ENCODE measurements at regions of chr11 and their contacts with region 1.

Region 1: DNA sequence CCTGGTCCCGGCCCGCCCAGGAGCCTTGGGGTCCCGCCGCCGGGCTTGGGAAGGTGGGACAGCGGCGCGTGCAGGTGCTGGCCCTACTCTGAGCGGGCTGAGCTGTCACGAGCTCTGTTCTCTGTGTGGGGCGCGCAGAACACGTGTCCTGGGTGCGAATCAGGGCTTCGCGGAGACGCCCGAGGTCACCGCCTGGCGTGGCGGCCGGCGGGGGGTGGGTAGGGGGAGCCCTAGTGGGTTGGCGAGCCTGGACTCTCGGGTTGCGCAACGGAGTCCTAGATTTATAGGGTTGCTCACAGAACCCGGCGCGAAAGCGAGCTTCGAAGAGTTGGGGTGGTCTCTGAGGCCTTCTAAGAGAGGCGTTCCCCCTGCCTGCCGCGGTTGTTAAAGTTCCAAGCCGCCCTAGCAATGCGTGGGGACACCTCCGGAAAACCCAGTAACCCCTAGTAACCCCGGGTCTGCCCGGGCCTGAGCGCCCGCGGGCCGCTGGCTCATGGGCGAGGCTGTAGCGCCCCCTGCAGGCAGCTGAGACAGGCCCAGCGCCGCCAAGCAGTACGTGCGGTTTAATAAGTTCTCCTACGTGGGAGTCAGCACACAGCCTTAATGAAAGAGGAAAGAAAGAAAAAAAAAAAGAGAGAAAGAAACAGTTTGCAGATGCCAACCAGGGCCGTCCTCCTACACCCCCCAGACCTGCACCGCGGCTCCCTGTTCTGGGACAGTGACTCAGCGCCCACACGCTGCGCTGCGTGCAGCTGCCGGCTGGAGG is 2.8 kb downstream of the ADM start:
- DNase-seq: peak; percentile 71
- ATAC-seq: peak; percentile 62
- H3K4me3 ChIP-seq: peak overlapping the region; percentile 79 to 88 (median 82)
- H3K27ac ChIP-seq: peak overlapping the region; percentile 69
- H3K4me1 ChIP-seq: peaks cover 45% of the 10 kb centered on the region
- H3K27me3 ChIP-seq: no peaks in the 10 kb centered on the region; a peak in 1 of 5 replicates
- CTCF ChIP-seq: peak; percentile 92
- EP300 ChIP-seq: peak in 1 of 2 experiments; percentile 35; a peak in 2 of 4 replicates
- POLR2A ChIP-seq: peak in 1 of 2 experiments; percentile 6; a peak in 1 of 4 replicates
- RAD21 ChIP-seq: peak; percentile 94

Region 2: GRCh38 chr11:9861860-9862725 is 445.5 kb before region 1 on chr11:
- CTCF ChIA-PET with region 1: no interaction called
- POLR2A ChIA-PET with region 1: no interaction called
- in situ Hi-C with region 1: no loop called
- intact Hi-C with region 1: loop called (anchors 5 kb)
- DNase-seq: peak; percentile 64
- ATAC-seq: peak; percentile 97
- H3K4me3 ChIP-seq: no peak overlapping the region
- H3K27ac ChIP-seq: no peak overlapping the region
- H3K4me1 ChIP-seq: peaks cover 28% of the 10 kb centered on the region
- H3K27me3 ChIP-seq: no peaks in the 10 kb centered on the region
- CTCF ChIP-seq: peak; percentile 89
- EP300 ChIP-seq: no peak
- POLR2A ChIP-seq: no peak
- RAD21 ChIP-seq: peak; percentile 84

Region 3: DNA sequence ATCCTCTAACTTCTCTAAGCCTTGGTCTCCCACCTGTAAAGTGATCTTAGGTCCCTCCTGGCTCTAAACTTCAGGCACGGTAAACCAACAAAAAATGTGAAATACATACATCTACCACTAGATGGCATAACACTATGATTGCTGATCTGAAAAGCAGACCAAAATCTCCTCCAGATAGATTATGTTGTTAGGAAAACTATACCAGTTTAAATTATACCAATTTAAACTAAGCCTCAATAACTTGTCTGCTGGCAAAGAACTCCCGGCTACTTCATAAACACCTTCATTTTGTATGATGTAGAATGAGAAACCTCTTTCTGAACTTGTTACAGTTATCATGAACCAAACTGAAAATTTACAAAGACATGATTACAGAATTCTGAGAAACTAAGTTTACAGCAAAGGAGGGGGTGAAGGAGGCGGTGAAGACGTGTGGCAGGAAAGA is 99.5 kb before region 1 on chr11:
- CTCF ChIA-PET with region 1: interaction called, 28 read pairs
- POLR2A ChIA-PET with region 1: interaction called, 5 read pairs
- in situ Hi-C with region 1: loop called (anchors 5 kb)
- intact Hi-C with region 1: loop called (anchors 1 kb)
- DNase-seq: peak; percentile 41
- ATAC-seq: peak; percentile 56
- H3K4me3 ChIP-seq: no peak overlapping the region
- H3K27ac ChIP-seq: no peak overlapping the region
- H3K4me1 ChIP-seq: peaks cover 31% of the 10 kb centered on the region
- H3K27me3 ChIP-seq: no peaks in the 10 kb centered on the region
- CTCF ChIP-seq: peak; percentile 73
- EP300 ChIP-seq: no peak
- POLR2A ChIP-seq: no peak
- RAD21 ChIP-seq: no peak

Region 4: DNA sequence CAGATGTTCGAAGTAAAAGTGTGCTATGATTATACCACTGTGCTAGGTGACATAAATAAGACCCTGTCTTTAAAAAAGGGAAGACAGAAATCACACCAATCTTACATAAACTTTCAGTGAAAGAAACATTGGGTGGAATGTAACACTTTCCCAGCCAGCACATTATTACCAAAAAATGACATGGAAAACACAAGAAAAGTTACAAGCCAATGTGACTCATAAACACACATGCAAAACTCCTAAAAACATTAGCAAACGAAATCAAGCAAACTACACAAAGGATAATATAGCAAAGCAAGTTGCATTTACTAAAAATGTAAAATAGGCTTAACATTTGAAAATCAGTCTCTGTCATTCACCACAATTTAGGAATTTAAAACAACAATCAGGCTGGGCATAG is 60.6 kb before region 1 on chr11:
- CTCF ChIA-PET with region 1: no interaction called
- POLR2A ChIA-PET with region 1: no interaction called
- in situ Hi-C with region 1: no loop called
- intact Hi-C with region 1: no loop called
- DNase-seq: no peak
- ATAC-seq: no peak
- H3K4me3 ChIP-seq: no peak overlapping the region
- H3K27ac ChIP-seq: no peak overlapping the region
- H3K4me1 ChIP-seq: no peaks in the 10 kb centered on the region
- H3K27me3 ChIP-seq: no peaks in the 10 kb centered on the region
- CTCF ChIP-seq: no peak
- EP300 ChIP-seq: no peak
- POLR2A ChIP-seq: no peak
- RAD21 ChIP-seq: no peak

Region 5: DNA sequence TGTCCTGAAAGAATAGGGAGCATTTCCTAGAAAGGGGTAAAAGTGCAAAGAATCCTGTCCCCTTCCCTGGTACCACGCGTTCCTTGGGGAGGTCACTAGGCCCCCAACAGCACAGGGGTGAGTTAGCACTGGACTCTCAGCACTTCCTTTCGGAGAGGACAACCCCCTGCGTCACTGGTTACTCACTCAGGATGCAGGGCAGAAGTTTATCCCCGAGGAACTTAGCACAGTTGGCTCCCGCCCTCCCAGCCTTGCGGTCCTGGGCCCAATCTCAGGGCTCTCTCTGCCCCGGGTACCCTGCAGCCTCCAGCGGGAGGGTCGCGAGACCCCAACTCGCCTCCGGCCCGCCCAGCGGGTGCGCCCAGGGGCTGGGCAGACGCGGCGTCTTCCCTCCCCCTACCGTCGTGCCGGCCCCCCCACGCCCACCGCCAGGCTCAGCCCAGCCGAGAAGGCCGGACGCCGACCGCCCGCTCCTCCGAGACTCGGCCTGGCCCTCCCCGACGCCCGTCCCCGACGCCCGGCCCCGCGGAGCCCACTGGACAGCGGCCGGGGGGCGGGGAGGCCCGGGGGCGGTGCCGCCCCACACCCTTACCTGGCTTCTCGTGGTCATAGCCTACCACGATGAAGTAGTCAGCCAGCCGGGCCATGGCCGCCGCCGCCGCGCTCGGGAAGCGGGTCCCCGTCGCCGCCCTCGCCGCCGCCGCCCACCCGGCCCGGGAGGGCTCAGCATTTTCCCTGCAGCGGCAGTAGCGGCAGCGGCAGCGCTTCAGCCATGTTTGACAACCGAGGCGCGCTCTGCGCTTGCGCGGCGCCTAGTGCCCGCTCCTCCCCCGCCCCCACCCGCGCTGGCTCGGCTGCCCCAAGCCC is 14.0 kb before region 1 on chr11 and contains the start of gene SBF2:
- CTCF ChIA-PET with region 1: interaction called, 7 read pairs
- POLR2A ChIA-PET with region 1: interaction called, 221 read pairs
- in situ Hi-C with region 1: no loop called
- intact Hi-C with region 1: loop called (anchors 1 kb)
- DNase-seq: peak; percentile 69
- ATAC-seq: peak; percentile 73
- H3K4me3 ChIP-seq: peak within 1 kb of the TSS; percentile 89 to 96 (median 90)
- H3K27ac ChIP-seq: peak within 1 kb of the TSS; percentile 88
- H3K4me1 ChIP-seq: peaks cover 60% of the 10 kb centered on the region
- H3K27me3 ChIP-seq: no peaks in the 10 kb centered on the region; a peak in 1 of 5 replicates
- CTCF ChIP-seq: no peak; the same call in 1 of the 2 replicates
- EP300 ChIP-seq: no peak
- POLR2A ChIP-seq: peak; percentile 79 to 87
- RAD21 ChIP-seq: no peak; the same call in 1 of the 2 replicates
- total RNA-seq, gene SBF2: 24.0 and 29.9 TPM in 2 replicates

Region 6: GRCh38 chr11:10328314-10329090 is 20.9 kb after region 1 on chr11:
- CTCF ChIA-PET with region 1: interaction called, 16 read pairs
- POLR2A ChIA-PET with region 1: interaction called, 118 read pairs
- in situ Hi-C with region 1: no loop called
- intact Hi-C with region 1: loop called (anchors 2 kb)
- DNase-seq: no peak
- ATAC-seq: no peak
- H3K4me3 ChIP-seq: no peak overlapping the region
- H3K27ac ChIP-seq: peak overlapping the region; percentile 90
- H3K4me1 ChIP-seq: peaks cover 59% of the 10 kb centered on the region
- H3K27me3 ChIP-seq: no peaks in the 10 kb centered on the region
- CTCF ChIP-seq: no peak
- EP300 ChIP-seq: no peak
- POLR2A ChIP-seq: no peak
- RAD21 ChIP-seq: no peak

Region 7: DNA sequence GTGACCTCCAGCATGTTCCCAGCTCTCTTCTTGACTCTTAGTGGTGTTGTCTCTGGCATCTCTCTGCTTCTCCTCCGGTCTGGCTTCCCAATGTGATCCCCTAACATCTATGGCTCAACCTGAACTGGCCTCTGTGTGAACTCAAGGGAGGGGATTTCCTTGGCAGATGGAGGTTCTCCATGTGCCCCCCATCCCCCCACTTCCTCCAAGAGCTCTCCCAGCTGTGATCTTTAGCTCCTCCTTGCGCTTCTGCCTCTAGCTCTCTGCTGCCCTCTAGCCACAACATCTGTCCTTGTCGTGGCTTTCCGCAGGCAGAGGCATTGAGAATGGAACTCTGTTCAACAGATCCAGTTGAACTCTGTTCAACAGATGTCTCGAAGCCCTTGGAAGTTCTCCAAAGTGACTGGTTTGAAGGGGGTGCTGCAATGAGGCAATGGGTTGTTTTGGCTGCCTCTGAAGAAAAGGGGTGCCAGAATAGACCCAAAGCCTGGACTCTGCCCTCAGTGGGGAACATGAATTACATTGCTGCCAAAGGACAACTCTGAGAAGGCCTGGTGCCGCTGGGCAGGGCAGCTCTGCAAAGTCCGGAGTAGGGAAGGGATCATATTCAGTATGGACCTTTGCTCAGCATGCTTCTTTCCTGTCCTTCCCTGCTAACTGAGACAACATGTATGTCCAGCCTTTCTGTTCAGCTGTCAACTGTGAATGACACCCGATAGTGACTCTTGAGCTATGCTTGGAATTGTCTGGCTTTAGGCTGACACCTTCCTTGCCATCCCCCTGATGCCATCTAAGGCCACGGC is 59.1 kb after region 1 on chr11:
- CTCF ChIA-PET with region 1: interaction called, 12 read pairs
- POLR2A ChIA-PET with region 1: interaction called, 27 read pairs
- in situ Hi-C with region 1: loop called (anchors 5 kb)
- intact Hi-C with region 1: loop called (anchors 2 kb)
- DNase-seq: peak; percentile 67
- ATAC-seq: peak; percentile 94
- H3K4me3 ChIP-seq: peak overlapping the region in 2 of 3 experiments; percentile 21 to 45; a peak in 2 of 6 replicates
- H3K27ac ChIP-seq: no peak overlapping the region
- H3K4me1 ChIP-seq: peaks cover 15% of the 10 kb centered on the region
- H3K27me3 ChIP-seq: no peaks in the 10 kb centered on the region
- CTCF ChIP-seq: peak; percentile 97
- EP300 ChIP-seq: no peak
- POLR2A ChIP-seq: no peak
- RAD21 ChIP-seq: peak; percentile 87

Measured in HepG2 (cell line).